Dorsolateral prefrontal cortex (tissue), 120 donors: ENCODE measurements at regions of chr13 and their contacts with region 1.

Region 1: DNA sequence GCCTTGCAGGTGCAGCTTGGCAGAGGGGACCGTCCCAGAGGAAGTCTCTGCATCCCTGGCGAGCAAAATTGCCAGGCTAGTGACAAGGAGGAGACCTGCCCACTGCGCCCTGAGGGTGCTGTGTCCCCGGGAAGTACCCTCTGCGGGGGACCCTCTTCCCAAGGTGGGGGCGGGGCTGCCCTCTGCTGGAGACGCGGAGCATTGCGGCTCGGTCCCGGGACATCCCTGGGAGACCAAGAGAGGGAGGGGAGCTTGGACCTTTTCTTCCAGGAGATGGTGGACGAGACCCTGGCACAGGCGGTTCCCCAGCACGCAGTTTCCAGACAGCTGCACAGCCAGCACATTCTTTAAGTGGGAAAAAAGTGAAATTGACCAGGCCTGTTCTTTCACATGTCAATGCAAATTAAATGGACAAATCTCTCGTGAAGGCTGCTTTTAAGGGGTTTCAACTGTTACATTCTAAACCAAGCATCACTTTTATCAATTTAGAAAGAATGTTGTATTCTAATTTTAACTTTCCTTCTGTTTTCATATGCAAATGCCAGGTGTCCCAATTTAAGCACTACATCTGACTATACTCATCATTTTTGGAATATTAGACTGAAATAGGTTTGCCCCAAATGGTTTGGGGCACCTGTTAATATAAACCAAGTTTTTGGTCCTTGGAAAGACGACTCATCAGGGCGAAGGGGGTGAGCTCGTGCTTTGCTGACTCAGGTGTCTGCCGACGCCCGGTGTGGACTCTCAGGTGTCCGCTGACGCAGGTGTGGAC is 60.7 kb downstream of the MCF2L start:
- DNase-seq: peak in 6 of 10 donors; percentile 44 to 76 (median 60)
- H3K4me3 ChIP-seq: no peak overlapping the region
- H3K27ac ChIP-seq: peak overlapping the region in 4 of 59 donors; percentile 12 to 59 (median 29)
- H3K27me3 ChIP-seq: peaks cover 0 to 4% (median 0%) of the 10 kb centered on the region in 45 donors
- CTCF ChIP-seq: peak; percentile 50 to 95 (median 88)

Region 2: GRCh38 chr13:112842343-112842856 is 187.3 kb before region 1 on chr13:
- intact Hi-C with region 1: no loop called
- DNase-seq: peak in 1 of 10 donors; percentile 17
- H3K4me3 ChIP-seq: peak overlapping the region in 7 of 59 donors; percentile 5 to 24 (median 21)
- H3K27ac ChIP-seq: peak overlapping the region in 1 of 59 donors; percentile 13
- H3K27me3 ChIP-seq: no peaks in the 10 kb centered on the region
- CTCF ChIP-seq: no peak

Region 3: GRCh38 chr13:113327766-113328471 is 298.2 kb after region 1 on chr13:
- intact Hi-C with region 1: no loop called
- DNase-seq: no peak
- H3K4me3 ChIP-seq: no peak overlapping the region
- H3K27ac ChIP-seq: peak overlapping the region in 1 of 59 donors; percentile 10
- H3K27me3 ChIP-seq: peaks cover 0 to 4% (median 0%) of the 10 kb centered on the region in 45 donors
- CTCF ChIP-seq: no peak

Region 4: GRCh38 chr13:113562085-113562749 is 532.5 kb after region 1 on chr13:
- intact Hi-C with region 1: loop called in 1 of 2 experiments (anchors 5 kb)
- DNase-seq: peak in 8 of 10 donors; percentile 70 to 89 (median 74)
- H3K4me3 ChIP-seq: peak overlapping the region in 20 of 59 donors; percentile 4 to 41 (median 24)
- H3K27ac ChIP-seq: peak overlapping the region in 4 of 59 donors; percentile 14 to 56 (median 47)
- H3K27me3 ChIP-seq: no peaks in the 10 kb centered on the region
- CTCF ChIP-seq: peak; percentile 16 to 77 (median 66)